Spleen (tissue), 13 donors: ENCODE measurements at regions of chr17 and their contacts with region 1.

Region 1: GRCh38 chr17:55295411-55296170 is 30.8 kb downstream of the HLF start:
- DNase-seq: no peak
- H3K4me3 ChIP-seq: no peak overlapping the region
- H3K27ac ChIP-seq: no peak overlapping the region
- H3K4me1 ChIP-seq: peaks cover 0 to 22% (median 10%) of the 10 kb centered on the region in 6 donors
- H3K27me3 ChIP-seq: no peaks in the 10 kb centered on the region
- CTCF ChIP-seq: peak; percentile 52 to 87 (median 79)
- POLR2A ChIP-seq: no peak

Region 2: DNA sequence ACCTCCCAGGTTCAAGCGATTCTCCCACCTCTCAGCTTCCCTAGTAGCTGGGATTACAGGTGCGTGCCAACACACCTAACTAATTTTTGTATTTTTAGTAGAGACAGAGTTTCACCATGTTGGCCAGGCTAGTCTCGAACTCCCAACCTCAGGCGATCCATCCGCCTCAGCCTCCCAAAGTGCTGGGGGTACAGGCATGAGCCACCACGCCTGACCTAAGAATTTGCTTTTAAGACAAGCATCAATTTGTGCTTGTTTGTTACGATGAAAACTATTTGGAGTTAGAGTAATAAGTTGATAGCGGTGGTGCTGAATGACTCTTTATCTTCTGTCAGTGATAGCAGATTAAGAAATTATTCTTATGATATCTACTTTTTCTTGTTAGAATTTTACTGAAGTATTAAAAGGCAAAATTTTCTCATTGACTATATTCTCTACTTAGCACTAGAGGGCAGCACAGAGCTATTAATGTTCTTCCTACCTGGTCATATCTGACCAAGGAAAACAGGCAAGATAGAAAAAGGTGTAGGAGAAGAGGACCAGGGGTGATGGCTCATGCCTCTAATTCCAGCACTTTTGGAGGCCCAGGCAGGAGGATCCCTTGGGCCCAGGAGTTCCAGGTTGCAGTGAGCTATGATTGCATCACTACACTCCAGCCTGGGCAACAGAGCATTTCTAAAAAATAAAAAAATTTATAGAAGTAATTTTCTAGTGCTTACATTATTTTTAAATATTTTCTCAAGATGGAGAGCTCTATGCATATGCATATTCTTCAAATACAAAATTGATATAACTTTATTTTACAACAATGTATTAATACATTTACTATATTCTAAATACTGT is 302.6 kb before region 1 on chr17:
- intact Hi-C with region 1: loop called (anchors 5 kb)
- DNase-seq: no peak
- H3K4me3 ChIP-seq: no peak overlapping the region
- H3K27ac ChIP-seq: no peak overlapping the region
- H3K4me1 ChIP-seq: no peaks in the 10 kb centered on the region
- H3K27me3 ChIP-seq: no peaks in the 10 kb centered on the region
- CTCF ChIP-seq: peak; percentile 31 to 73 (median 64)
- POLR2A ChIP-seq: no peak

Region 3: DNA sequence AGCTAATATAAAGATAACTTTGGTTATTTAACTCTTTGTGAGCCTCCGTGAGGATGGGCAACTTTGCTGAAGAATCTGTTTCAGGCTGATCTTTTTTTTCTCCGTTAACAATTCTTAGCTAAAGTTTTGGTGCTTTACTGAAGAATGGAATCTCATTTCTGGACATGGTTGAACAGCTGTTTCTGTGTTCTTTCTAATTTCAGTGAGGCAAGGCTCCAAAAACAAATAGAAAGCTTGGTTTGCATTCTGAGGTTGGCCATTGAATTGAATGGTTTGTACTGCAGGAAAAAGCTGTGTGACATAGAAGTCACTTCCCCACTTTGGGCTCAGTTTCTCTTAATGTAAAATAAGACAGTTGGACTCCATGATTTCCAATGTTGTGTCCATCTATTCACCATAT is 53.1 kb before region 1 on chr17:
- intact Hi-C with region 1: loop called (anchors 10 kb)
- DNase-seq: no peak
- H3K4me3 ChIP-seq: no peak overlapping the region
- H3K27ac ChIP-seq: no peak overlapping the region
- H3K4me1 ChIP-seq: peaks cover 6 to 19% (median 17%) of the 10 kb centered on the region in 6 donors
- H3K27me3 ChIP-seq: peaks cover 0 to 50% (median 0%) of the 10 kb centered on the region in 7 donors
- CTCF ChIP-seq: no peak
- POLR2A ChIP-seq: no peak